ENCODE measurements at regions of chr1 and their contacts with region 1.

Region 1: GRCh38 chr1:1164701-1165451 is 8.8 kb upstream of the TTLL10 start:
- DNase-seq: peak in 1 of 5 donors; percentile 18
- ATAC-seq: no peak
- H3K4me3 ChIP-seq: no peak overlapping the region
- H3K27ac ChIP-seq: no peak overlapping the region
- H3K4me1 ChIP-seq: no peaks in the 10 kb centered on the region
- H3K27me3 ChIP-seq: peaks cover 22 to 84% (median 50%) of the 10 kb centered on the region in 9 donors
- CTCF ChIP-seq: no peak
- POLR2A ChIP-seq: no peak

Region 2: DNA sequence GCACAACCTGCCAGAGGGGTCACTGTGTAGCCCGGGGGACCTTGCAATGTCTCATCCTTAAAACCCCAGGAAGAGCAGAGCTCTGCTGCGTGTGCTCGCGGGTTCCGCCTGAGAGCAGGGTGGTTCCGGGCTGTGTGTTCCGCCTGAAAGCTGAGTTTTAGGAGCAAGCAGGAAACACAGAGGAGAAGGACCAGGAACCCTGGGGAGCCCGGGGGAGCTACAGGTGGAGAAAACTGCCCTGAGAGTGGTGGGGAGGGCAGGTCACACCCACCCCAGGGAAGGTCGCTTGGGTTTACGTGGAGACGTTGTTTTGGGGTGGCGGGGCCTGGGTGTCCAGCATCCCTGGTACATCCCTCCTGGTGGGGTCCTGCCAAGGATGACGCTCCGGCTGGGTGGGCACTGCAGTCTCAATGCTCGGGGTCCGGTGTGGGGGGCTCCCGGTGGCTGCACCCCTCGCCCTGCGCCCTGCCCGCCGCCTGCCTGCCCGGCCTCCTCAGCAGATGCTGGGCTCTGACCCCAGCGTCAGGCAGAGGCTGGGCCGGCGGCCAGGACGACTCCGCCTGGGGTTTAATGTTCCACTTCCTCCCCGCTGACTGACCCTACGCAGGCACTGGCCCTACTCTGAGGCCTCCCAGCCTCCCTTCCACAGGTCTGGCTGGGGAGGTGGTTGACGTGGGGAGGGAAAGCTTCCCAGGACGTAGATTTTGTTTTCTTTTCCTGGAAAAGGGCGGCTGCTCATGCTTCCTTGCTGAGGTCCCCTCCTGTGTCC is 31.7 kb before region 1 on chr1:
- intact Hi-C with region 1: loop called in 1 of 10 experiments (anchors 5 kb)
- DNase-seq: peak in 4 of 5 donors; percentile 47 to 68 (median 62)
- ATAC-seq: peak in 3 of 4 donors; percentile 24 to 75 (median 55)
- H3K4me3 ChIP-seq: peak overlapping the region in 1 of 12 donors; percentile 5
- H3K27ac ChIP-seq: peak overlapping the region in 8 of 12 donors; percentile 4 to 68 (median 53)
- H3K4me1 ChIP-seq: peaks cover 0 to 13% (median 0%) of the 10 kb centered on the region in 12 donors
- H3K27me3 ChIP-seq: peaks cover 12 to 23% (median 18%) of the 10 kb centered on the region in 9 donors
- CTCF ChIP-seq: no peak
- POLR2A ChIP-seq: no peak

Region 3: DNA sequence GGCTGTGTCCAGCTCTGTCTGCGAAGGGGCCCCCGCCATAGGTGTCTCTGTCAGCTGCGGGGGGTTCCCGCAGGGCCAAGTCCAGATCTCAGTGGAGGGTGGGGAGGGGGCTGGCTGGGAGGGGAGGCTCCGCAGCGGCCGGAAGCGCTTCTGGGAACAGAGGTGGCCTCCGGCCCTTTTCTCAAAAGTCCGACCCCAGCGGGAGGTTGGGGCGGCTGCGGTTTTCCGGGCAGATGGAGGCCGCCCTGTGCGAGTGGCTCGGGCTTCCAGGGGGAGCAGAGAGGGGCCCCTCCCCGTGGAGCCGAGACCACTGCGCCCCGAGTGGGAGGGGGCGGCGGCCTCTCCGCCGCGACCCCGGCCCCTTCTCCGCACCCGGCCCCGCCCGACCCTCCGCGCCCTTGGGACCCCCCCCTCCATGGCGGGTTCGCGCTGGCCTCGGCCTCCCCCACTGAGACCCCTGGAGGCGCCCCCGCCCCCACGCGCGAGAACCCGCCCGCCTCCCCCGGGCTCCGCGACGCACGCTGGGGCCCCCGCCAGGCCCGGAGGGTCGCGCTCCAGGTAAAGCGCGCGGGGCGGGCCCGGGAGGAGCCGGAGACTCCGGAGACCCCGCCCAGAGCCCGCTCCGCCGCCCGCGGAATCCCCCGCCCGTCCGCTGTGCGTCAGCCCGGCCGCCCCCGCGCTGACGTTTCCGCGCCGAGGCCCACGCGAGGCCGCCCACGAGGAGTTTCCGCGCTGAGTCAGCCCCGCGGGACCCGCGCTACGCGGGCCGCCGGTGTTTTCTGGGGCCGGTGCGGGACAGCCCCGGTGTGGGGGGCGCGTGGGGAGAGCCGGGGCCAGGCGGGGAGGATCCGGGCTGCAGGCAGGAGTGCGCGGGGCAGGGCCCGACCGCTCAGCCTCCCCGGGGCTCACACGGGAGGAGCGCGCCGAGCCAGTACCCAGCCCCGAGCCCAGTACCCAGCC is 36.3 kb after region 1 on chr1:
- intact Hi-C with region 1: loop called in 1 of 10 experiments (anchors 5 kb)
- DNase-seq: peak; percentile 59 to 85 (median 75)
- ATAC-seq: peak in 3 of 4 donors; percentile 35 to 76 (median 67)
- H3K4me3 ChIP-seq: peak overlapping the region; percentile 26 to 62 (median 52)
- H3K27ac ChIP-seq: peak overlapping the region in 5 of 12 donors; percentile 51 to 71 (median 64)
- H3K4me1 ChIP-seq: peaks cover 0 to 18% (median 10%) of the 10 kb centered on the region in 12 donors
- H3K27me3 ChIP-seq: peaks cover 0 to 44% (median 11%) of the 10 kb centered on the region in 9 donors
- CTCF ChIP-seq: no peak
- POLR2A ChIP-seq: no peak